ENCODE measurements at regions of chr19 and their contacts with region 1.

Region 1: GRCh38 chr19:55258828-55259539 is at the start of gene PPP6R1:
- DNase-seq: peak; percentile 92 to 97 (median 96)
- ATAC-seq: peak; percentile 91
- H3K4me3 ChIP-seq: peak within 1 kb of the TSS; percentile 87
- H3K4me3 Mint-ChIP-seq: peak within 1 kb of the TSS; percentile 89 to 99 (median 98)
- H3K27ac ChIP-seq: peak within 1 kb of the TSS; percentile 94
- H3K27ac Mint-ChIP-seq: peak within 1 kb of the TSS; percentile 97 to 99 (median 98)
- H3K4me1 ChIP-seq: peaks cover 31 to 43% of the 10 kb centered on the region in 2 donors
- H3K4me1 Mint-ChIP-seq: peaks cover 36 to 45% (median 41%) of the 10 kb centered on the region in 7 donors
- H3K27me3 ChIP-seq: no peaks in the 10 kb centered on the region
- H3K27me3 Mint-ChIP-seq: no peaks in the 10 kb centered on the region
- total RNA-seq, gene PPP6R1: 151 to 223 (median 168) TPM

Region 2: DNA sequence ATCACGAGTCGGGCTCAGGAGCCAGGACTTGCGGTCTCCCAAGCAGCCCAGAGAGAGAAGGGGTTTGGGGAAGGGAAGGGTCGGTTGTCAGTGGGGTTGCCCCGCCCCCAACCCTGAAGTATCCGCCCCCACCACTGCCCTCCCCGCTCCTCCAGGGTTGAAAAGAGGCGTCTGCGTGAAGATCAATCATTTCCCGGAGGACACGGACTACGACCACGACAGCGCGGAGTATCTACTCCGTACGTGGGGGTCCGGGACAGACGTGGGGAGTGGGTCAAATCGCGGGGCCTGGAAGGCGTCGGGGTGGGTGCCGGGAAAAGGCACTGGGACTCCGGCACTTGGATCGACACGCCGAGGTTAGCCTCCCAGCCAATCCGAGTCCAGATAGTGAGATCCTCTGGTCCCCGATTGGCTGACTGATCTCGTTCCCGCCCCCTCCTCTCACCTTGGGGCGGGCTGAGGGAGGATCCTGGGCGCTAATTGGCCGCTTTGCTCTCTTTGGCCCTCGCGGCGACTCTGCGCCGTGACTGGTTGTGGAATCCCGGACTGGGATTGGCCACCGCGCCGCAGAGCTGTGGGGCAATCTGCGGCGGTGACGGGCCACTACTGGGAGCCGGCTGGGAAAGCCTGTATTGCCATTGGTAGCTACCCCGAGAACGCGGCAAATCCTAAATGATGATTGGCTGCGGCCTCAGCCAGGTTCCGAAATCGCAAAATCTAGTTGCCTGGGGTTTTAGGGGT is 1280.8 kb before region 1 on chr19:
- CTCF ChIA-PET with region 1: no interaction called
- POLR2A ChIA-PET with region 1: no interaction called
- intact Hi-C with region 1: no loop called
- DNase-seq: peak in 4 of 9 donors; percentile 27 to 53 (median 32)
- ATAC-seq: peak; percentile 66
- H3K4me3 ChIP-seq: peak overlapping the region; percentile 42
- H3K4me3 Mint-ChIP-seq: peak overlapping the region; percentile 73 to 90 (median 83)
- H3K27ac ChIP-seq: no peak overlapping the region
- H3K27ac Mint-ChIP-seq: peak overlapping the region in 1 of 9 donors; percentile 50
- H3K4me1 ChIP-seq: peaks cover 0 to 5% of the 10 kb centered on the region in 2 donors
- H3K4me1 Mint-ChIP-seq: peaks cover 14 to 41% (median 30%) of the 10 kb centered on the region in 7 donors
- H3K27me3 ChIP-seq: peaks cover 6 to 16% of the 10 kb centered on the region in 2 donors
- H3K27me3 Mint-ChIP-seq: peaks cover 48 to 64% (median 56%) of the 10 kb centered on the region in 5 donors

Region 3: DNA sequence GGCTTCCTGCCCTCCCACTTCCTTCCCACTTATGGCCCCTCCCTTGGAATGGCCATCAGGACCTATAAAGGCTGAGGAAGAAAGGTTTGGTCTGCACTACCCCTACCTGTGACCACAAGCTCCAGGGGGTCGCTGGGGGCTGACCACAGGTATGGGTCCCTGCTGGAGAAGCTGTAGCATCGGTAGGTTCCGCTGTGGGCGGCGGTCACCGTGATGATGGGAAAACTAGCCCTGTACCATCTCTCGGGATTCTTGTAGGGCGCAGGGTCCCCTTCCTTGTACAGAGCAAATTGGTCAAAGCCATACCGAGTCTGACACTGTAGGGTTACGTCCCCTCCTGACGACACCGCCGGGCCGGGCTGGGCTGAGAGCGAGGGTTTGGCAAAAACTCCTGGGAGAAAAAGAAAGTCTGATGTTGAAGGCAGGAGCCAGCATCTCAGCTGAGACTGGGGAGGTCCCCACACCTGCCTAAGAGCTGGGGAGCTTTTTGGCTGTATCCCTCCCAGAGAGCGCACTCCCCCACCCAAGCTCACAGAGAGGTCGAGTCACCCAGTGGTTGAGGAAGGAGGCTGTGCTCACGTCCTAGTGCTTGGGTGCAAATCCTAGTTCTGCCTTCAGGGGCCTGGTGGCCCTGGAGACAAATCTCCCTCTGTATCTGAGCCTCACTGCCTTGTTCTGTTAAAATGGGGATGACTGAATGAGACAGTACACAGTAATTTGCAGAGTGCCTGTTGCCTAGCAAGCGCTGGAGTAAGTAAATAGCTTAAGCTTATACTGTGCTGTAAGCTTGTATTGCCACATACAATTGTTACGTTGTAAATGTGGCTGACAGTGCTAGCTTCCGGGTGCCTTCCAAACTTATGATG is 231.3 kb before region 1 on chr19:
- CTCF ChIA-PET with region 1: no interaction called
- POLR2A ChIA-PET with region 1: no interaction called
- intact Hi-C with region 1: no loop called
- DNase-seq: no peak
- ATAC-seq: peak; percentile 57
- H3K4me3 ChIP-seq: no peak overlapping the region
- H3K4me3 Mint-ChIP-seq: no peak overlapping the region
- H3K27ac ChIP-seq: peak overlapping the region; percentile 17
- H3K27ac Mint-ChIP-seq: peak overlapping the region in 5 of 9 donors; percentile 8 to 58 (median 38)
- H3K4me1 ChIP-seq: no peaks in the 10 kb centered on the region
- H3K4me1 Mint-ChIP-seq: peaks cover 0 to 25% (median 10%) of the 10 kb centered on the region in 7 donors
- H3K27me3 ChIP-seq: no peaks in the 10 kb centered on the region
- H3K27me3 Mint-ChIP-seq: no peaks in the 10 kb centered on the region

Region 4: DNA sequence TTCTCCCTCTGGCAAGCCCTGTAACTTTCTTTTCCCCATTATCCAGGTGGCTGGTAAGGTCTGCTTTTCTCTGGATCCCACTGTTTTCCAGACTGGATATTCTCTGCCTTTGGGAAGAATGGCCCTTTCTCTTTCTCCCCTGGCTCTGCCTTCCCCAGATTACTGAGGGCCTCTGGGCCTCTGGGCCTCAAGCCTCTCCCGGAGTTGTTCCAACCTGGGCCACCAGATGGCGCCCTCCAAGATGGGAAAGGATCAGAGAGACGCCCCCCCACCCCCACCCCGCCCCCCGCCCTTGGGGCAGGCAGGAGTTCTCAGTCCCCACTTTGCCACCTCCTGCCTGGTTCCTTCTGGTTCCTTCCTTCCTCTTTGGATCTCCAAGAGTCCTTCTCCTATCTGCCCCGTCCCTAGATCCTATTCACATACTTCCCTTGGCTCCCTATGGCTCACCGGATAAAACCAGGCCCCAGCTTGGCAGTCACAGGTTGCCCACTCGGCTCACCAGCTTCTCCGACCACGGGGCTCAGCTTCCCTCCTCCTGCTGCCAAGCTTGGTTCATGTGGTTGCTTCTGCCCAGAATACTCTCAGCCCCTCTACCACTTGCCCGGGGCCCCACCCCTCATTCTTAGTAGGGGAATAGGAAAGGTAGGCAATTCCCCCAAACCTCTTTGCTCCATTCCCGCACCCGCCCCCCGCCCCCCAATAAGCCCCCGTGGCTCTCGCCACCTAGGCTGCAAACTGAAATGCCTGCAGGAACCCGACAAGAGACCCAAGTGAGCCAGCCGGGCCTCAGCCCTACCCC is 170.2 kb before region 1 on chr19:
- CTCF ChIA-PET with region 1: no interaction called
- POLR2A ChIA-PET with region 1: no interaction called
- intact Hi-C with region 1: loop called in 1 of 2 experiments (anchors 10 kb)
- DNase-seq: peak; percentile 33 to 85 (median 60)
- ATAC-seq: peak; percentile 73
- H3K4me3 ChIP-seq: no peak overlapping the region
- H3K4me3 Mint-ChIP-seq: peak overlapping the region; percentile 40 to 84 (median 73)
- H3K27ac ChIP-seq: no peak overlapping the region
- H3K27ac Mint-ChIP-seq: peak overlapping the region in 1 of 9 donors; percentile 17
- H3K4me1 ChIP-seq: peaks cover 12 to 19% of the 10 kb centered on the region in 2 donors
- H3K4me1 Mint-ChIP-seq: peaks cover 19 to 30% (median 22%) of the 10 kb centered on the region in 7 donors
- H3K27me3 ChIP-seq: peaks cover 0 to 8% of the 10 kb centered on the region in 2 donors
- H3K27me3 Mint-ChIP-seq: peaks cover 35 to 50% (median 44%) of the 10 kb centered on the region in 5 donors

Region 5: DNA sequence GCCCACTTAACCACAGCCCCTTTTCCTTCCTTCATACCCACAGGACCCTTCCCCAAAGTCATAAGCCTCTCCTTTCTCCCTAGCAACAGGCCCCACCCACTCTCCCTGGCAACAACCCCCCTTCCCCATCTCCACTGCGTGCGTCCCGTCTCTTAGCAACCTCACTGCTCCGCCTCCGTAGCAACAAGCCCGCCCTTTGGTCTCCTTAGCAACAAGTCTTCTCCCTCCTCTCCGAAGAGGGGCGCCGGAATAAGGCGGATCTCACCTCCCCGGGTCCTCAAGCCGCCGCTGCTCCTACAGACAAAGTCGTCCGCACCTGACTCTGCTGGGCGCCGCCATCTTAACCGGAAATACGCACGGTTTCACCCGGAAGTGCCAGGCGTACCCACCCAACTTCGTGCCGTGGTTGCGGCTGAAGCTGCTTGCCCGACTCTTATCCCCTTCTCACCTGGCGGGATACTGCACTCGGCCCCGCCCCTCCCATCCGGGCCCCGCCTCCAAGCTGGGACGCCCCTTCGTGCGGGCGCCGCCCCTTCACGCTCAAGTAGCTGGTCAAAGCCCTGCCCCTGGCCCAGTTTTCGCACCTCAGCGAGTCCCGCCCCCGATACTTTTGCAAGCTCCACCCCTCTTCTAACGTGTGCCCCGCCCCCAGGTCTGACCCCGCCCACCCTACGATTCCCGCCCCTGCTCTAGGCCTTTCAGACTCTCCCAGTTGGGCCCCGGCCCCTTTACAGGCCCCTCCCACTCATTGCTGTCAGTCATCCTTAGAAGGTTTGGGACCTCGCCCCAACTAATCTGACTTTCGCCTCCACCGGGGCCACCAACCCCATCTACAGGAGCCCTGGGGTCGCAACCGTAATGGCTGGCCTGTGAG is 21.0 kb after region 1 on chr19 and contains the start of gene HSPBP1:
- CTCF ChIA-PET with region 1: interaction called, 5 read pairs
- POLR2A ChIA-PET with region 1: interaction called, 156 read pairs
- intact Hi-C with region 1: loop called (anchors 1 kb)
- DNase-seq: peak; percentile 88 to 96 (median 96)
- ATAC-seq: peak; percentile 92
- H3K4me3 ChIP-seq: peak within 1 kb of the TSS; percentile 91
- H3K4me3 Mint-ChIP-seq: peak within 1 kb of the TSS; percentile 92 to 100 (median 98)
- H3K27ac ChIP-seq: peak within 1 kb of the TSS; percentile 89
- H3K27ac Mint-ChIP-seq: peak within 1 kb of the TSS; percentile 91 to 100 (median 98)
- H3K4me1 ChIP-seq: peaks cover 6 to 32% of the 10 kb centered on the region in 2 donors
- H3K4me1 Mint-ChIP-seq: peaks cover 12 to 52% (median 39%) of the 10 kb centered on the region in 7 donors
- H3K27me3 ChIP-seq: no peaks in the 10 kb centered on the region
- H3K27me3 Mint-ChIP-seq: peaks cover 0 to 9% (median 0%) of the 10 kb centered on the region in 5 donors
- total RNA-seq, gene HSPBP1: 15.0 to 30.0 (median 16.0) TPM

Region 6: DNA sequence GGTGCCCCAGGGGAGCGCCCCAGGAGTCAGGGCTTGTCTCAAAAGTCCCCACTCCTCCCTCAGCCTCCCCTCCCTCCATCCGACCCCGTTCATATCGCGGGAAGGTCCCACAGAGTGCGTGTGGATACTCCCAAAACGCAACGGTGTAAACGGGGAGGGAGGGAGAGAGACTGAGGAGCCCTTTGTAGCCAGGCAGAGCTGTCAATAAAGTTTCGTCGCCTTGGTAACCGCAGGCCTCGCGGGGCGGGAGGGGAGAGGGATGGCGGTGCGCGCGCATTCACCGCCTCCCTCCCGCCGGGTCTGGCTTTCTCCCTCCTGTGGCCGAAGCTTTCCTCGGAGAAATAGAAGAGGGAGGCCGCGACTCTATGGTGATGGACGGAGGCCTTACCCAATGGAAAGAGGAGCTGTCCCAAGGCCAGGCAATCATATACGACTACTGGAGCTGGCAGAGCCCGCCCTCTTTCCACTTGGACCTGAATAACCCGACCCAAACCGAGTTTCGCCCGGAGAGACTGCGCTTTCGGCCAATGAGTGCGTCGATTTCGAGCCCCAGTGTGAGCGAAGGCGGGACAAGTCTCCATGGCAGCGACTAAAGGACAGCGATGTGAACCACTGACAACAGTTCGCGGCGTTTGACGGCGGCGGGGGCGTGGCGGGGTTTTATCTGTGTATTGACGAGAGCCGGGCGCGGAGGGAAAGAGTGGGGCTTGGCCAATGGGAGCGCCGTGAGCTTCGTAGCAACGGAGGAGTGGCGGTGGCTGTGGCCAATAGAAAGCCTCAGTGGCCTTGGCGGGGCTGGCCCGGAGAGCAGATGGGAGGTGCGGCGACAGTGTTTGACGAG is 80.3 kb after region 1 on chr19 and contains the start of gene KMT5C:
- CTCF ChIA-PET with region 1: no interaction called
- POLR2A ChIA-PET with region 1: interaction called, 25 read pairs
- intact Hi-C with region 1: loop called (anchors 1 kb)
- DNase-seq: peak; percentile 99 to 100 (median 100)
- ATAC-seq: peak; percentile 83
- H3K4me3 ChIP-seq: peak within 1 kb of the TSS; percentile 80
- H3K4me3 Mint-ChIP-seq: peak within 1 kb of the TSS; percentile 87 to 99 (median 96)
- H3K27ac ChIP-seq: peak within 1 kb of the TSS; percentile 93
- H3K27ac Mint-ChIP-seq: peak within 1 kb of the TSS; percentile 88 to 100 (median 97)
- H3K4me1 ChIP-seq: peaks cover 8 to 15% of the 10 kb centered on the region in 2 donors
- H3K4me1 Mint-ChIP-seq: peaks cover 5 to 28% (median 24%) of the 10 kb centered on the region in 7 donors
- H3K27me3 ChIP-seq: no peaks in the 10 kb centered on the region
- H3K27me3 Mint-ChIP-seq: peaks cover 0 to 16% (median 0%) of the 10 kb centered on the region in 5 donors
- total RNA-seq, gene KMT5C: 21.8 to 63.3 (median 27.2) TPM

Region 7: GRCh38 chr19:55407800-55408532 is 149.0 kb after region 1 on chr19:
- CTCF ChIA-PET with region 1: no interaction called
- POLR2A ChIA-PET with region 1: interaction called, 23 read pairs
- intact Hi-C with region 1: loop called (anchors 1 kb)
- DNase-seq: peak; percentile 94 to 99 (median 97)
- ATAC-seq: peak; percentile 93
- H3K4me3 ChIP-seq: peak overlapping the region; percentile 89
- H3K4me3 Mint-ChIP-seq: peak overlapping the region; percentile 86 to 97 (median 92)
- H3K27ac ChIP-seq: peak overlapping the region; percentile 96
- H3K27ac Mint-ChIP-seq: peak overlapping the region; percentile 93 to 100 (median 99)
- H3K4me1 ChIP-seq: peaks cover 17 to 24% of the 10 kb centered on the region in 2 donors
- H3K4me1 Mint-ChIP-seq: peaks cover 21 to 36% (median 26%) of the 10 kb centered on the region in 7 donors
- H3K27me3 ChIP-seq: no peaks in the 10 kb centered on the region
- H3K27me3 Mint-ChIP-seq: peaks cover 0 to 12% (median 0%) of the 10 kb centered on the region in 5 donors

Region 8: DNA sequence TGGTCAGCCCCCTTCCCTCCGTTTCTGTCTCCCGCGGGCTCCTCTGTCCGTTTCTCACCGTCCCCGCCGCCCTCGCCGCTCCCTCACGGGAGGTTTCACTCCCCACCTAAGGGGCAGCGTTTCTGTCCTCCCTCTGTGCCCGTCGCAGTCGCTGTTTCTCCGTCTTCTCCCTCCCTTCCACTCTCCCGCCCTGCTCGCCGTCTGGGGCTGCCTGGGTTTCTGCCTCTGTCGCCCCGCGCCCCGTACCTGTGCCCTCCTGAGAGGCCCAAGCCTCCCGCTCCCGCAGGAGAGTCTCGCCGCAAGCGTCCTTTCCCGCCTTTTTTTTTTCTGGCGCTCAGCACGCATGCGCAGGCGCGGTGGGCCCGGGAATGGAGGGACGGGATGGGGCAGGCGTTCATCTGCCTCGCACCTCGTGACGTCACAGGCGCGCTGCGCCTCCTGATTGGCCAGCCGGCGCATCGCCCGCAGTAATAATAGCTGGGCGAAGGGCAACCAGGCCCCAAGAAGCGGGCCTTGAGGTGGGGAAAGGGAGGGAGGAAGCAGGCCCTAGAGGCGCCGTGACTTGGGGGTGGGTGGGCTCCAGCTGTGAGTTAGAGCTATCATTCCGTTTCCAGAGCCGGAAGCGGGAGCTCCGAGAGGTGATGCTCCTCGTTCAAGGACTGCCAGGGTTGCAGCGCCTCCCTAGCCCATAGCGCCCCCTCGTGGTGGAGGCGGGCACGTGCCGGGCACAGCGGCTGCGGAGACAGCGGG is 244.7 kb after region 1 on chr19:
- CTCF ChIA-PET with region 1: interaction called, 3 read pairs
- POLR2A ChIA-PET with region 1: no interaction called
- intact Hi-C with region 1: loop called in 1 of 2 experiments (anchors 1 kb)
- DNase-seq: peak; percentile 81 to 98 (median 92)
- ATAC-seq: peak; percentile 98
- H3K4me3 ChIP-seq: peak overlapping the region; percentile 79
- H3K4me3 Mint-ChIP-seq: peak overlapping the region; percentile 78 to 89 (median 84)
- H3K27ac ChIP-seq: peak overlapping the region; percentile 46
- H3K27ac Mint-ChIP-seq: peak overlapping the region; percentile 59 to 96 (median 82)
- H3K4me1 ChIP-seq: peaks cover 4% of the 10 kb centered on the region in 2 donors
- H3K4me1 Mint-ChIP-seq: peaks cover 0 to 22% (median 10%) of the 10 kb centered on the region in 7 donors
- H3K27me3 ChIP-seq: no peaks in the 10 kb centered on the region
- H3K27me3 Mint-ChIP-seq: peaks cover 0 to 8% (median 6%) of the 10 kb centered on the region in 5 donors

Region 9: GRCh38 chr19:55643348-55644176 is 384.6 kb after region 1 on chr19 and contains the start of gene ZNF581:
- CTCF ChIA-PET with region 1: interaction called, 4 read pairs
- POLR2A ChIA-PET with region 1: interaction called, 5 read pairs
- intact Hi-C with region 1: loop called in 1 of 2 experiments (anchors 2 kb)
- DNase-seq: peak; percentile 63 to 85 (median 81)
- ATAC-seq: peak; percentile 73
- H3K4me3 ChIP-seq: peak within 1 kb of the TSS; percentile 80
- H3K4me3 Mint-ChIP-seq: peak within 1 kb of the TSS; percentile 87 to 97 (median 94)
- H3K27ac ChIP-seq: peak within 1 kb of the TSS; percentile 80
- H3K27ac Mint-ChIP-seq: peak within 1 kb of the TSS; percentile 91 to 98 (median 96)
- H3K4me1 ChIP-seq: peaks cover 24 to 25% of the 10 kb centered on the region in 2 donors
- H3K4me1 Mint-ChIP-seq: peaks cover 23 to 63% (median 54%) of the 10 kb centered on the region in 7 donors
- H3K27me3 ChIP-seq: no peaks in the 10 kb centered on the region
- H3K27me3 Mint-ChIP-seq: no peaks in the 10 kb centered on the region
- total RNA-seq, gene ZNF581: 27.0 to 35.8 (median 32.1) TPM

Measured in naive thymus-derived CD4-positive, alpha-beta T cell (primary cell).